ENCODE measurements at regions of chr3 and their contacts with region 1.

Region 1: GRCh38 chr3:56667973-56668579 is 15.0 kb downstream of the TASOR start:
- DNase-seq: no peak
- H3K4me3 ChIP-seq: no peak overlapping the region
- H3K27ac ChIP-seq: no peak overlapping the region
- H3K4me1 ChIP-seq: no peaks in the 10 kb centered on the region
- H3K27me3 ChIP-seq: no peaks in the 10 kb centered on the region
- CTCF ChIP-seq: no peak
- EP300 ChIP-seq: no peak
- POLR2A ChIP-seq: no peak

Region 2: GRCh38 chr3:56610669-56611335 is 57.3 kb before region 1 on chr3:
- intact Hi-C with region 1: loop called in 1 of 4 experiments (anchors 2 kb)
- DNase-seq: no peak
- H3K4me3 ChIP-seq: no peak overlapping the region
- H3K27ac ChIP-seq: no peak overlapping the region
- H3K4me1 ChIP-seq: no peaks in the 10 kb centered on the region
- H3K27me3 ChIP-seq: no peaks in the 10 kb centered on the region
- CTCF ChIP-seq: no peak
- EP300 ChIP-seq: no peak
- POLR2A ChIP-seq: no peak